Astrocyte of the cerebellum (primary cell): ENCODE measurements at regions of chr16 and their contacts with region 1.

Region 1: DNA sequence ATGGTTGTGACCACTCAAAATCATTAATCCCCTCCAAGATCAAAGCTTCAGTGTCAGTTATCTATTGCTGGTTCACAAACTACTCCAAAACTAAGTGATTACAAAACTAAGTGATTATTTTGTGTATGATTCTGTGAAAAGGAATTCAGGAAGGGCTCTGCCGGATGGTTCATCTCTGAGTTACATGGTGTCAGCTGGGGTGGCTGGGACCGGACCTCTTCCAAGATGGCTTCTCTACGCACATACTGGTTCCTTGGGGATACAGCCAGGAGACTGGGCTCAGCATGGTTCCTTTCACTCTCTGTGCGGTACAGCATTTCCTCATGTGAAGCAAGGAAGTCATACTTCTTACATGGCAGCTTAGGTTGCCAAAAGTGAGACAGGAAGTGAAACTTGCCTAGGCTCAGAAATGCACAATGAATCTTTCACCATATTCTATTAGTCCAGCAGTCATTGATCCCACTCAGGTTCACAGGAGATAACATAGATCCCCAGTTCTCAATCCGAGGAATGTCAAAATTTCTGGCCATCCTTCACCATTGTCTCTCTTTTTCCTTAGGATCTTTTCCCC is 97.9 kb upstream of the IRX6 start:
- DNase-seq: no peak
- H3K4me3 ChIP-seq: no peak overlapping the region
- CTCF ChIP-seq: no peak

Region 2: DNA sequence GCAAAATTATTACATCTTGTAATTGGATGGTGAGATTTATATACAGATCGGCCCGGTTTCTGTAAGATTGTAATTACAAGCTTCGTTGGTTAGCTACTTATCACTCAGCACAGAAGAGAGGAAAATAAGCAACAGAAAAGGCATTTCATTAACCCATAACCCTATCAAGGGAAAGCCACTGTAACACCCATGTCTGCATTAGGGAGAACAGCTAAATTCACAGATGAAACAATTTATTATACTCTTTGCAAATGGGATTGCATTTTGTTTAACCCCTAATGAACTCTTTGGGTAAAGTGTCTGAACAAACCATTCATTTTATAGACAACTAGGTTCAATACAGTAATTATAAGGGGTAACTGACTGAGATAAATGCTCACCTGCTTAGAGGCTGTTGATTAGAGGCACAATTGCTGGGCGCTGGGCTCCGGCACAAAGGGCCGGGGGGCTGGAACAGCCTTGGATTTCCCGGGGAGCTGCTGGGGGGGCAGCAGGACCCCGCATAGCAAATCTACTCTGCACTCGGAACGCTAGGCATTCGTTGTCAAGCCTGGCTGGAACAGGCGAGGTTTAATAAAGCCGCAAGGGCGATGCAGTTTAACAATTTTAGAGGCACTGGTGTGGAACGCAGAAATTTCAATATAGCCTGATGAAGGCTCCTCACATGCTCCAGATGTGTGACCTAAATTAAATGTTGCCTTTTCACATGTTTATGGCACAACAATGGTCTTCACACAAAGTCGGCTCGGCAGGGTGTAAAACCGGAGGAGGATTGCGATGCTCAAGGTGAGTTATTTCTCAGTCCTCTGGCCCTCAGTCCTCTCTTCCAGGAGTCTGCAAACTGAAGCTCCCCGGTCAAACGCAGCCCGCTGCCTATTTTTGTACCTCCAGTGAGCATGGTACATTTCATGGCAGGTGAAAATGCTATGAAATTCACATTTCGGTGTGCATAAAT is 36.1 kb before region 1 on chr16:
- in situ Hi-C with region 1: loop called (anchors 5 kb)
- DNase-seq: no peak
- H3K4me3 ChIP-seq: no peak overlapping the region
- CTCF ChIP-seq: no peak

Region 3: GRCh38 chr16:55264949-55265348 is 38.9 kb after region 1 on chr16:
- in situ Hi-C with region 1: no loop called
- DNase-seq: no peak
- H3K4me3 ChIP-seq: no peak overlapping the region
- CTCF ChIP-seq: no peak